Heart right ventricle (tissue), 16 donors: ENCODE measurements at regions of chr9 and their contacts with region 1.

Region 1: GRCh38 chr9:125472926-125473701 is 211.5 kb downstream of the GAPVD1 start:
- DNase-seq: peak; percentile 23 to 35
- ATAC-seq: peak; percentile 68 to 91 (median 81)
- H3K4me3 ChIP-seq: peak overlapping the region in 1 of 10 donors; percentile 6
- H3K27ac ChIP-seq: peak overlapping the region in 9 of 10 donors; percentile 5 to 85 (median 77)
- H3K4me1 ChIP-seq: peaks cover 4 to 65% (median 32%) of the 10 kb centered on the region in 9 donors
- H3K27me3 ChIP-seq: no peaks in the 10 kb centered on the region
- CTCF ChIP-seq: peak in 2 of 9 donors; percentile 19 to 28

Region 2: DNA sequence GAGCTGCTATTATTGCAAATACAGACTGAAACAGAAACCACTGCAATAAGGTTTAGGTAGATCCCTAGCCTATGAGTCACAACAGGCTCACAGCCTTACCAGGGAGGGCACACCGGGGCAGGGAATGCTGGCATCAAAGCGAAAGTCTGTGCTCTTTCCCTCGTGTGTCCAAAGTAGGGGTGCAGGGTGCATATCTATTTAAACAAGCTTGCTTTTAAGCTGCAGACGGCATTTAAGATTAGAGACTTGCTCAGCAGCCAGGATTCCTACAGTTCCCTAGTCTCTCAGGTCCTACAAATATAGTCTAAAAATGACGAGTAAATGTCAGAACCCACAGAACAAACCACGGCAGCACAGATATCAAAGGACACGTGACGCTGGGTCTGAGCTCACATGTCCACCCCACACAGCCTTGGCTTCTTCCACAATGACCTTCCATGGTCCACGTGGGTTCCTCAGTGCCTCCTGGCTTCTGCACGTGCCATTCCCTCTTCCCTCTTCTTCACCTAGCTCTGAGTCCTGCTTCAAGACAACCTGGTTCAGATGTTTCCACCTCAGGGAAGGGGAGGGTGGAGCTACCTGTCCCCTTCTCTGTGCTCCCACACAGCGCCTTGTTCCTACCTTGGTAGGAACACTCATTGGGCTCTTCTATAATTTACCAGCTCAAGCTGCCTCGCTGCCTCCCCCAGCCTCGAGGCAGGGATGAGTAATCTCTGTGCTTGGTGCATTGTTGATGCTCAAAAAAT is 40.7 kb after region 1 on chr9:
- intact Hi-C with region 1: loop called in 2 of 10 experiments (anchors 5 kb)
- DNase-seq: peak in 1 of 2 donors; percentile 19
- ATAC-seq: peak; percentile 66 to 94 (median 82)
- H3K4me3 ChIP-seq: peak overlapping the region in 5 of 10 donors; percentile 7 to 32 (median 23)
- H3K27ac ChIP-seq: peak overlapping the region in 9 of 10 donors; percentile 41 to 80 (median 68)
- H3K4me1 ChIP-seq: peaks cover 0 to 54% (median 37%) of the 10 kb centered on the region in 9 donors
- H3K27me3 ChIP-seq: no peaks in the 10 kb centered on the region
- CTCF ChIP-seq: no peak

Region 3: GRCh38 chr9:125538092-125538473 is 65.0 kb after region 1 on chr9:
- intact Hi-C with region 1: loop called in 1 of 10 experiments (anchors 5 kb)
- DNase-seq: peak in 1 of 2 donors; percentile 30
- ATAC-seq: peak in 6 of 8 donors; percentile 48 to 79 (median 67)
- H3K4me3 ChIP-seq: no peak overlapping the region
- H3K27ac ChIP-seq: peak overlapping the region in 8 of 10 donors; percentile 0 to 65 (median 50)
- H3K4me1 ChIP-seq: peaks cover 0 to 78% (median 33%) of the 10 kb centered on the region in 9 donors
- H3K27me3 ChIP-seq: no peaks in the 10 kb centered on the region
- CTCF ChIP-seq: no peak

Region 4: GRCh38 chr9:125544988-125545651 is 72.0 kb after region 1 on chr9:
- intact Hi-C with region 1: loop called in 1 of 10 experiments (anchors 5 kb)
- DNase-seq: no peak
- ATAC-seq: peak in 6 of 8 donors; percentile 39 to 72 (median 54)
- H3K4me3 ChIP-seq: no peak overlapping the region
- H3K27ac ChIP-seq: peak overlapping the region; percentile 10 to 73 (median 61)
- H3K4me1 ChIP-seq: peaks cover 22 to 84% (median 39%) of the 10 kb centered on the region in 9 donors
- H3K27me3 ChIP-seq: no peaks in the 10 kb centered on the region
- CTCF ChIP-seq: no peak